ENCODE measurements at regions of chr17 and their contacts with region 1.

Region 1: DNA sequence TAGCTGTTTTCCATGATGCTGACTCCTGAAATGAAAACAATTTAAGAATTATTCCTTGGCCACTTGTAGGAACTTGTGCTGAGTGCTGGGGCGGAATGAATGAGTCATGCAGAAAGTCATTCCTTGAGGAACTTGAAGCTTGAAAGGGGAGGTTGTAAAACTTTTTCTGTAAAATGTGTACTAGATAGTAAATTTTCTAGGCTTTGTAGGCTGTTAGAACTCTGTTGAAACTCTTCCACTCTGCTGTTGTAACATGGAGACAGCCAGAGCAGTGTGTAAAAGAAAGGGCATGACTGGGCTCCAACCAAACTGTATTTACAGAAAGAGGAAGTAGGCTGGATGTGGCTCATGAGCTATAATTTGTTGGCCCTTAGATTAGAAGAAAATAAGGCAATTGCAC is 46.1 kb downstream of the ABCA8 start:
- DNase-seq: peak in 21 of 42 donors; percentile 5 to 72 (median 33)

Region 2: DNA sequence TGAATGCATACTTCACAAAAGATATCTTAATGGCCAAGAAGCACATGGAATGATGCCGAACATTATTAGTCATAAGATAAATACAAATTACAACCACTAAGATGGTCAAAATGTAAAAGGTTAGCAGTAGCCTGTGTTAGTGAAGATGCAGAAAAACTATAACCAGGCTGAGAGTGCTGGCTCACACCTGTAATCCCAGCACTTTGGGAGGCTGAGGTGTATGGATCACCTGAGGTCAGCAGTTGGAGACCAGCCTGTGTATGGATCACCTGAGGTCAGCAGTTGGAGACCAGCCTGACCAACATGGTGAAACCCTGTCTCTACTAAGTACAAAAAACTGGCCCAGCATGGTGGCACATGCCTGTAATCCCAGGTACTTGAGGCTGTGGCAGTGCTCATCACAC is 262.4 kb before region 1 on chr17:
- intact Hi-C with region 1: no loop called
- DNase-seq: no peak

Region 3: GRCh38 chr17:68771867-68772515 is 137.1 kb before region 1 on chr17:
- intact Hi-C with region 1: loop called (anchors 10 kb)
- DNase-seq: peak in 23 of 42 donors; percentile 16 to 79 (median 49)

Region 4: GRCh38 chr17:68794636-68795434 is 114.2 kb before region 1 on chr17:
- intact Hi-C with region 1: loop called (anchors 10 kb)
- DNase-seq: peak; percentile 26 to 90 (median 75)

Region 5: GRCh38 chr17:69047368-69048263 is 138.6 kb after region 1 on chr17:
- intact Hi-C with region 1: no loop called
- DNase-seq: no peak